ENCODE measurements at regions of chr4 and their contacts with region 1.

Region 1: DNA sequence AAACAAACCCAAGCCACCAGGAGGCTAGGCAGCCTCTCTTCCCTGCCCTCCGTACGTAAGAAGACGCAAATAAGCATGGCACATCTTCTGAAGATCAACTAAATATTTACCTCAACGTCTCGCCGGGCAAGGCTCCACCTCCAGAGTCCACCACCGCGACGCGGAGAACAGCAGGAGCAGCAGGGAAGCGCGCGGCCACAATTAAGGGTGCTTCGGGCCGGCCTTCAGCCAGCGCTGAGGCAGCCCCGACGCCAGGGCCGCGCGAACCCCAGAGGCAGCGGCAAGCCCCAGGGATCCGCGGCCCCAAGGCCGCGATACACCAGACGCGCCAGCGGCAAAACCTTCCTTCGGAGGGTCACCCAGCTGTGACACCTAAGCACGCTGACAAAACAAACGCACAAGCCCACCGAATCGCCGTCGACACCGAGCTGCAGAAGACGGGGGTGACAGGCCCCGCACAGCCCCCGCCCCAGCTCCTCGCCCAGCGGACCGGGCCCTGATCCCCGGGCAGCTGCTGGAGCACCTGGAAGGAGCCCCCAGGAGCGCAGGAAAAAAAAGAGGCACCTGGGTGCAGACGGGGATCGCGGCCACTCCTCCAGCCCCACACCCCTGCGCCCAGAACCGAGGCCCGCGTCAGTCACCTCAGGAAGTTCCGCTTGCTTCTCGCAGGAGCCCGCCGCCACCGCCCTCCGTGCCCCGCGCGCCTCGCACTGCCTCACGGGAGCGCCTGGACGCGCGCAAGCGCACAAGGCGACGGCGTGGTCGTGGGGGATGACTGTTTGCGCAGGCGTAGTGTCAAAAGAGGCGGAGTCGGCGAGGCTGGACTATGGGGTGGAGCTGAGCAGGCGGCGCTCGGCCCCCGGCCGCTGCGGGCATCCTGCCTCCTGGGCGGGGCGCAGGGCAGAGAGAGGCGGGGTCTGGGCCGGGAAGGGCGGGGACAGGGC is at the starts of genes HAUS3 and POLN:
- DNase-seq: peak; percentile 59
- H3K4me3 ChIP-seq: peak within 1 kb of the TSS; percentile 95
- CTCF ChIP-seq: no peak

Region 2: GRCh38 chr4:2262143-2262943 is 20.7 kb after region 1 on chr4:
- CTCF ChIA-PET with region 1: interaction called, 3 read pairs
- POLR2A ChIA-PET with region 1: interaction called, 12 read pairs
- DNase-seq: peak; percentile 96
- H3K4me3 ChIP-seq: peak overlapping the region; percentile 64
- CTCF ChIP-seq: no peak

Region 3: GRCh38 chr4:2811830-2812611 is 570.3 kb after region 1 on chr4:
- CTCF ChIA-PET with region 1: no interaction called
- POLR2A ChIA-PET with region 1: no interaction called
- DNase-seq: no peak
- H3K4me3 ChIP-seq: peak overlapping the region; percentile 29
- CTCF ChIP-seq: no peak